Body of pancreas (tissue), 4 donors: ENCODE measurements at regions of chr11 and their contacts with region 1.

Region 1: DNA sequence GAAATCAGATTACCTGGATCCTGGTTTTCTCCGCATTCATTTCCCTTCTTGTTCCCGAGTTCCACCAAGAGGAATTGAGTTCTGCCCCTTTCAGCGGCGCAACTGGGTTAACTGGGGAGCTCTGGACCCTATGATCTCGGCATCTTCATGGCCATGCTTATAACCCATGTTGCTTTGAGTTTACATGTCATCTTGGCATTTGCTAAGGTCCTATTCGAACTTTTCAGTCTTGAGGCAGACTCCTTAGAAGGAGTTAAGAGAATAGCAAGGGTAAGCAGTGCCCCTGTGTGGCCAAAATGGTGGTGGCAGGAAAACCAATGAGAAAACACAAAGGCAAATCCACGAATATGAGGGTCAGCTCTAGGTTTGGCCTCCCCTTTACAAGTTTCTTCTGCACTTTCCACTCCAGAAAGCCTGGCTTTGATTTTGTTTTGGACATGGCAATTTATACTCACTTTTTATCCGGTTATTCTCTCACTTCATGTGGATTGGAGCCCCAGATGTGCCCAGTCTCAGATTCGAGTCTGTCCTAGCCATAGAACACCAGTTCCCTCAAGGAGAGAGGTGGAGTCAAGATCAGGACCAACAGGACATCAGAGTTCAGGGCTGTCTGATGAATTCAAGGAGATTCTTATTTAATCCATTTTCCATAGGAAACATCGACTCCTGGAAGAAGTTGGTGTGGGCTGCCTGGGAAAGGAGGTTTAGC is 55.3 kb upstream of the FBXO3 start:
- DNase-seq: peak; percentile 54 to 73 (median 64)
- ATAC-seq: peak; percentile 85
- H3K4me3 ChIP-seq: peak overlapping the region in 1 of 2 donors; percentile 24
- H3K27ac ChIP-seq: no peak overlapping the region
- H3K4me1 ChIP-seq: peaks cover 11% of the 10 kb centered on the region
- H3K27me3 ChIP-seq: peaks cover 0 to 12% of the 10 kb centered on the region in 2 donors
- CTCF ChIP-seq: peak; percentile 57 to 86 (median 82)
- POLR2A ChIP-seq: no peak

Region 2: GRCh38 chr11:33373636-33374035 is 456.0 kb before region 1 on chr11:
- intact Hi-C with region 1: loop called (anchors 5 kb)
- DNase-seq: no peak
- ATAC-seq: no peak
- H3K4me3 ChIP-seq: no peak overlapping the region
- H3K27ac ChIP-seq: no peak overlapping the region
- H3K4me1 ChIP-seq: peaks cover 26% of the 10 kb centered on the region
- H3K27me3 ChIP-seq: peaks cover 0 to 14% of the 10 kb centered on the region in 2 donors
- CTCF ChIP-seq: no peak
- POLR2A ChIP-seq: no peak